CD8-positive, alpha-beta T cell (primary cell): ENCODE measurements at regions of chr13 and their contacts with region 1.

Region 1: DNA sequence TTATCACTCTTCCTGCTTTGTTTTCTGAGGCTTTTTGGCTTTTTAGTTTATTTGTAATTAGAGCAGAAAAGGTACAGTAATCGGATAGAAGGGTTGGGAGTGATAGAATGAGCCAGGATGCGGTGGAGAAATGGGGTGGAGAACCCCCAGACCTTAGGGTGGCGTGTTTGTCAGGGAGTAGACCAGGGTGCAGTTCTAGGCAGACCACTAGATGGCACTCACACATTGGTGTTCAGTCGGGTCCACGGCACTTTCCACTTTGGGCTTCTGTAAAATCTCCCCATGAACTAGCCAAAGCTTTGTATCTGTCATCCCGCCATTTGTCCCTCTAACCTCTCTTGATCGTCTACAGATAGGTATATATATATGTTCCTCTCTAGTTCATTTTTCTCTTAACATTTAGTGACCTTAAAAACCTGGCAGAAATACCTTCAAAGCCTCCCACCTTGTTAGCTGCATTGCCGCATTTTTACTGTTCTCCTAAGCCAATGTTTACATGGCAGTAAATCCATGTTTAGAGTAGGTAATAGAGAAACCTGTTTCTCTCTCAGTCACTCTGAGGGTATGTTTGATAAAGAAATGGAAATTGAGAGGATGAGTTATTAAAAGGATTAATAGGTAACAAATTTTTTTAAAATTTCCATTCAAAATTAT is 154.9 kb downstream of the TM9SF2 start:
- DNase-seq: peak; percentile 71 to 90 (median 86)
- ATAC-seq: peak; percentile 61
- H3K4me3 ChIP-seq: peak overlapping the region; percentile 30 to 32
- H3K4me3 Mint-ChIP-seq: peak overlapping the region; percentile 84
- H3K27ac ChIP-seq: peak overlapping the region; percentile 12 to 22
- H3K27ac Mint-ChIP-seq: peak overlapping the region; percentile 97
- H3K4me1 ChIP-seq: peaks cover 42% of the 10 kb centered on the region
- H3K4me1 Mint-ChIP-seq: peaks cover 47% of the 10 kb centered on the region
- H3K27me3 ChIP-seq: no peaks in the 10 kb centered on the region
- H3K27me3 Mint-ChIP-seq: no peaks in the 10 kb centered on the region
- CTCF ChIP-seq: peak; percentile 92

Region 2: GRCh38 chr13:99606324-99607066 is 49.7 kb before region 1 on chr13:
- CTCF ChIA-PET with region 1: interaction called, 5 read pairs
- POLR2A ChIA-PET with region 1: interaction called, 19 read pairs
- intact Hi-C with region 1: loop called (anchors 2 to 5 kb)
- DNase-seq: peak; percentile 82 to 95 (median 91)
- ATAC-seq: peak; percentile 93
- H3K4me3 ChIP-seq: peak within 1 kb of the TSS; percentile 89 to 93
- H3K4me3 Mint-ChIP-seq: peak within 1 kb of the TSS; percentile 92
- H3K27ac ChIP-seq: peak within 1 kb of the TSS; percentile 72 to 81
- H3K27ac Mint-ChIP-seq: peak within 1 kb of the TSS; percentile 92
- H3K4me1 ChIP-seq: peaks cover 23% of the 10 kb centered on the region
- H3K4me1 Mint-ChIP-seq: peaks cover 45% of the 10 kb centered on the region
- H3K27me3 ChIP-seq: no peaks in the 10 kb centered on the region
- H3K27me3 Mint-ChIP-seq: no peaks in the 10 kb centered on the region
- CTCF ChIP-seq: no peak

Region 3: GRCh38 chr13:99916366-99917103 is 260.3 kb after region 1 on chr13:
- CTCF ChIA-PET with region 1: interaction called, 42 read pairs
- POLR2A ChIA-PET with region 1: no interaction called
- intact Hi-C with region 1: loop called (anchors 1 kb)
- DNase-seq: peak in 2 of 9 experiments; percentile 60 to 73
- ATAC-seq: peak; percentile 86
- H3K4me3 ChIP-seq: no peak overlapping the region
- H3K4me3 Mint-ChIP-seq: no peak overlapping the region
- H3K27ac ChIP-seq: no peak overlapping the region
- H3K27ac Mint-ChIP-seq: no peak overlapping the region
- H3K4me1 ChIP-seq: no peaks in the 10 kb centered on the region
- H3K4me1 Mint-ChIP-seq: peaks cover 11% of the 10 kb centered on the region
- H3K27me3 ChIP-seq: no peaks in the 10 kb centered on the region
- H3K27me3 Mint-ChIP-seq: peaks cover 17% of the 10 kb centered on the region
- CTCF ChIP-seq: peak; percentile 83

Region 4: GRCh38 chr13:100235311-100235901 is 579.2 kb after region 1 on chr13:
- CTCF ChIA-PET with region 1: interaction called, 39 read pairs
- POLR2A ChIA-PET with region 1: interaction called, 8 read pairs
- intact Hi-C with region 1: loop called (anchors 1 kb)
- DNase-seq: peak in 3 of 9 experiments; percentile 15 to 66 (median 57)
- ATAC-seq: no peak
- H3K4me3 ChIP-seq: no peak overlapping the region
- H3K4me3 Mint-ChIP-seq: no peak overlapping the region
- H3K27ac ChIP-seq: no peak overlapping the region
- H3K27ac Mint-ChIP-seq: no peak overlapping the region
- H3K4me1 ChIP-seq: peaks cover 9% of the 10 kb centered on the region
- H3K4me1 Mint-ChIP-seq: peaks cover 4% of the 10 kb centered on the region
- H3K27me3 ChIP-seq: no peaks in the 10 kb centered on the region
- H3K27me3 Mint-ChIP-seq: no peaks in the 10 kb centered on the region
- CTCF ChIP-seq: peak; percentile 62

Region 5: GRCh38 chr13:100588331-100589177 is 932.3 kb after region 1 on chr13 and contains the start of gene GGACT:
- CTCF ChIA-PET with region 1: interaction called, 4 read pairs
- POLR2A ChIA-PET with region 1: interaction called, 5 read pairs
- intact Hi-C with region 1: loop called (anchors 2 kb)
- DNase-seq: peak; percentile 68 to 93 (median 85)
- ATAC-seq: peak; percentile 95
- H3K4me3 ChIP-seq: peak within 1 kb of the TSS; percentile 65 to 70
- H3K4me3 Mint-ChIP-seq: peak within 1 kb of the TSS; percentile 84
- H3K27ac ChIP-seq: peak within 1 kb of the TSS; percentile 80 to 82
- H3K27ac Mint-ChIP-seq: peak within 1 kb of the TSS; percentile 89
- H3K4me1 ChIP-seq: peaks cover 39% of the 10 kb centered on the region
- H3K4me1 Mint-ChIP-seq: peaks cover 44% of the 10 kb centered on the region
- H3K27me3 ChIP-seq: no peaks in the 10 kb centered on the region
- H3K27me3 Mint-ChIP-seq: no peaks in the 10 kb centered on the region
- CTCF ChIP-seq: peak; percentile 74
- total RNA-seq, gene GGACT: 0.98 to 1.1 TPM

Region 6: GRCh38 chr13:101127741-101128353 is 1471.6 kb after region 1 on chr13:
- CTCF ChIA-PET with region 1: interaction called, 3 read pairs
- POLR2A ChIA-PET with region 1: no interaction called
- intact Hi-C with region 1: loop called (anchors 1 to 2 kb)
- DNase-seq: peak in 3 of 9 experiments; percentile 12 to 56 (median 39)
- ATAC-seq: peak; percentile 68
- H3K4me3 ChIP-seq: no peak overlapping the region
- H3K4me3 Mint-ChIP-seq: no peak overlapping the region
- H3K27ac ChIP-seq: no peak overlapping the region
- H3K27ac Mint-ChIP-seq: no peak overlapping the region
- H3K4me1 ChIP-seq: no peaks in the 10 kb centered on the region
- H3K4me1 Mint-ChIP-seq: no peaks in the 10 kb centered on the region
- H3K27me3 ChIP-seq: no peaks in the 10 kb centered on the region
- H3K27me3 Mint-ChIP-seq: peaks cover 6% of the 10 kb centered on the region
- CTCF ChIP-seq: peak; percentile 72